ENCODE measurements at regions of chr14 and their contacts with region 1.

Region 1: DNA sequence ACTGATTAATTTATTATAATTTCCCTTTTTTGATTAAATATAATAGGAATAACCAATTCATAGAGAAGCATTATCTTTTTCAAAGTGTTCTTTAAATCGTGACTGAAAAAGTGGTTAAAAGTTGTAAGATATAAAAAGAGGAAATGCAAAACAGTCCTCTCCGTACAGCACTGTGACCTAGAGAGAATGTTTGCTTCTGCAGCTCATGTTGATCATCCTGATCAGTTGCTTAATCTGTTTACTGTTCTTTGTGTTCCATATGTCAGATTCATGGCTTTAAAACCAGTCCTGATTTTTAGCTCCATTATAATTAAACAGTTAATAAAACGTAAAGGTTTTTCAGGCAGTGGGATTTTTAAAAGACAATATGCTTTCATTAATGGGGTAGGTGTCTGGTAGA is 4.7 kb downstream of the TTC8 start:
- DNase-seq: no peak
- CTCF ChIP-seq: no peak

Region 2: DNA sequence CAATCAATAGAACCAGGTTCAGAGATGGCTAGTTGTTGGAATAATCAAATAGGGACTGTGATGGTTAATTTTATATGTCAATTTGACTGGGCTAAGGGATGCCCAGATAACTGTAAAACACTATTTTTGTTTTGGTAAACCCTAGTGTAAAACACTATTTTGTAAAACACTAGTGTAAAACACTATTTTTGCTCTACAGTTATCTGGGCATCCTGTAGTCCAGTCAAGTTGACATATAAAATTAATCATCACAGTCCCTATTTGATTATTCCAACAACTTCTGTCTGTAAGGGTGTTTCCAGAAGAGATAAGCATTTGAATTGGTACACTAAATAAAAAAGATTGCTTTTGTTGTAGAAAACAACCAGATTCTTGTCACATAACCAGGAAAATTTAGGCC is 20.8 kb before region 1 on chr14:
- CTCF ChIA-PET with region 1: no interaction called
- POLR2A ChIA-PET with region 1: no interaction called
- DNase-seq: no peak
- CTCF ChIP-seq: no peak

Region 3: DNA sequence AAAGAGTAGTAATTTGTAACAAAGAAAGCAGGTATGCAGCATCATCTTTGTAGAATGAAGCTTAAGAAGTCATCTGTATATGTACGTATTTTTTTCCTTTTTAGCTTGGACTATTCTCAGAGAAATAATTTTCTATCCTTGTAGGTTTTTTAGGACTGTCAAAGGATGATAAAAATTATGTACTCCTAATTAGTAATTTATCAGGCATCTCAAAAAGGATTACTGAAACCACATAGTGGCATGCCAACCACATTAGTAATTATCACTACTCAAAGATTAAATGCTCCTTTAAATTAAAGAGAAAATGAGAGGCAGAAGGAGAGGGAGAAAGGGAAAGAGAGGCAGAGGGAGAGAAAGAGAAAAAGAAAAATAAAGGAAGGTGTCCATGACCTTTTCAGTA is 12.6 kb after region 1 on chr14:
- CTCF ChIA-PET with region 1: interaction called, 33 read pairs
- POLR2A ChIA-PET with region 1: no interaction called
- DNase-seq: no peak
- CTCF ChIP-seq: no peak

Region 4: GRCh38 chr14:88961214-88961613 is 132.0 kb after region 1 on chr14:
- CTCF ChIA-PET with region 1: no interaction called
- POLR2A ChIA-PET with region 1: no interaction called
- DNase-seq: no peak
- CTCF ChIP-seq: no peak